HEK293T (cell line): ENCODE measurements at regions of chr19 and their contacts with region 1.

Region 1: GRCh38 chr19:14048443-14049153 is 13.3 kb downstream of the PALM3 start:
- DNase-seq: peak; percentile 80

Region 2: DNA sequence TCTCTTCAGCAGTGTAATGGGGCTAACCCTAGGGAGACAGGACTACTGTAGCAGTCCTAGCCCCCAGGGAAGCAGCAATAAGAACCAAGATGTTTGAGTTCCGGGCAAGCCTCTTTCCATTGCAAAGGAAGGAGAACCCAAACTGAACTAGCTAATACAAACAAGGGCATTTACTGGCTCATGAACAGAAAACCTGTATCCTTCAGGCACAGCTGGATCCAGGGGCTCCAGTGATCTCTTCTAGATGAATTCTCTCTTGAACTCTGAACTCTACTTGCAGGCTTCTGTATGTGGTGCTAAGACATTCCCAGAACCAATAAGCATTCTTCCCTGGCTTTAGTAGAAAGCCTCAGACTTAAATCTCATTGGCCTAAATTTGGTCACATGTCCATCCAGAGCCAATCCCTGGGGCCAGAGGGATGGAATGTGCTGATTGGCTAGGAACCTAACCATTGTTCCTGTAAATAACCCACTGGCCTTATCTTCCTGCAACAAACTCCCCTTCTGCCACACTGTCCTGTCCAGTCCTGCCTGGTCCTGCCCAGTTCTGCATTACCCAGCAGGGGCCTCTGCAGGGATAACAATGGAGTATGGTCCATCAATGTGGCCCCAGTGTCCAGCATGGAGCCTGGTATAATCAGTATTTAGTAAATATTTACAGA is 106.4 kb before region 1 on chr19:
- CTCF ChIA-PET with region 1: no interaction called
- POLR2A ChIA-PET with region 1: no interaction called
- DNase-seq: no peak

Region 3: DNA sequence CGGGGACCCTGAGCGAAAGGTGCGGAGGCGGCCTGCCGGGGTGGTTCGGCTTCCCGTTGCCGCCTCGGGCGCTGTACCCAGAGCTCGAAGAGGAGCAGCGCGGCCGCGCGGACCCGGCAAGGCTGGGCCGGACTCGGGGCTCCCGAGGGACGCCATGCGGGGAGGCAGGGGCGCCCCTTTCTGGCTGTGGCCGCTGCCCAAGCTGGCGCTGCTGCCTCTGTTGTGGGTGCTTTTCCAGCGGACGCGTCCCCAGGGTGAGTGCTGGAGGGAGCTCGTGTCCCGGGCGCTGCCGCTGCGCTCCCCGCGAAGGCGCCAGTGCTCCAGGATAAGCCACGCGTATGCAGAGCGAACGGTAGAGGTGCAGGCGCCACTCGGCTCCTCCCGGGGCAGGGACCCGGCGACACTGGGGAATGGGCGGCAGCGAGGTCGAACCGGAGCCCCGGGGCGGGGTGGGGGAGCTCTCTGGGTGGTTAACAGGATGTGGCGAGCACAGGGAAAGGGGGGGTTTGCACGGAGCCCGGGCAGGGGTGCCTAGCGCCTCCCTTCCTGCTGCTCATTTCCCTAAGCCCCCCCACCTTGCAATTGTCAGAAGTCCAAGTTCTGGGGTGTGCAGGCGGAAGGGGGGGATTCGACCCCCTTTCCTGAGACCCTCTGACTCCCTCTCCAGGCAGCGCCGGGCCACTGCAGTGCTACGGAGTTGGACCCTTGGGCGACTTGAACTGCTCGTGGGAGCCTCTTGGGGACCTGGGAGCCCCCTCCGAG is 16.7 kb before region 1 on chr19 and contains the start of gene IL27RA:
- CTCF ChIA-PET with region 1: interaction called, 13 read pairs
- POLR2A ChIA-PET with region 1: no interaction called
- DNase-seq: peak; percentile 64

Region 4: DNA sequence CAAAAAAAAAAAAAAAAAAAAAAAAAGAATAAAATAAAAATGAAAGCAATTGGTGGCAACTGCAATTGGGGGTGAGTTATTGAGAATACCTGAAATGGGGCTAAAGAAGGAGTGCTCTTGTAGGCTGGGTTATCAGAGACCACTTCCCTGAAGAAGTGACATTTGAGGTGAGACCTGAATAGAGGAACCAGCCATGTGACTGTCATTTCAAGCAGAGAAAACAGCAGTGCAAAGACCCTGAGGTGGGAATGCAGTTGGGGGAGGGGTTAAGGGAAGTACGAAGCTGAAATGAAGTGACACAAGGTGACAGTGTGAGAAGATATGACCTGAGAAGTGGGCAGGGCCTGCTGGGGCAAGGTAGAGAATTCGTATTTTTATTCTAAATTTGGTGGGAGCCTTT is 17.5 kb after region 1 on chr19:
- CTCF ChIA-PET with region 1: no interaction called
- POLR2A ChIA-PET with region 1: no interaction called
- DNase-seq: no peak